ENCODE measurements at regions of chr12 and their contacts with region 1.

Region 1: DNA sequence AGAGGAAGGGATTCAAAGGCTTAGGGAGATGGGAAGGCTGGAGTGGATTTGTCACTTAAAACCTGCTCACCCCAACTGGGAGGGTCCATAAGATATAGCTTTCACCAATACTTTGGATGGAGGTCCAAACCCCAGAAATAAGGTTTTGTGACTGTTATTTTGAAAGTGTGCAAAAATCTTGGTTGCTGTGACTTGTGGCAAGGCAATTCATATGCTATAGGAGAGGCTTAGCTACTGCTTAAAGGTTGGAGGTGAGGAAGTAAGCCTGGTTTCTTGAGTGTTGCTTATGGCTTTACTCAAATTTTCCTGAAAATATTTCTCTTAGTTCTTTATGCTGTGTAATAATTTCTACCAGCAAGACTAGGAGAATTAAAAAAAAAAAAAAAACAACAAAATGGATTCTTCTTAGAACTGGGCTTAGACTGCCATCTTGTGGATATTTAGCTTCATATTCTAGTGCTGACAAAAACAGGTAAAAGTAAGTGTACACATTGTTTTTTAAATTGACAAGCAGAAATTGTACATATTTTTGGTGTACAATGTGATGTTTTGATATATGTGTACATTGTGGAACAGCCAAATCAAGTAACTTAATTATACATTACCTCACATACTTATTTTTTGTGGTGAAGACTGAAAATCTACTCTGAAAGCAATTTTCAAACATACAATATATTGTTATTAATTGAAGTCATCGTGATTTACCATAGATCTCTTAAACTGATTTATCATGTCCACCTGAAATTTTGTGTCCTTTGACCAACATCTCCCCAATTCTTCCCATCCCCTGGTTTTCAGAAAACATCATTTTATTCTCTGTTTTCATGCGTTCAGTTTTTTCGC is 23.0 kb downstream of the PDE6H start:
- DNase-seq: no peak
- H3K4me3 ChIP-seq: no peak overlapping the region
- H3K27ac ChIP-seq: no peak overlapping the region
- H3K4me1 ChIP-seq: peaks cover 0 to 8% of the 10 kb centered on the region in 2 donors
- H3K27me3 ChIP-seq: no peaks in the 10 kb centered on the region
- CTCF ChIP-seq: peak; percentile 40 to 92 (median 73)
- POLR2A ChIP-seq: no peak

Region 2: GRCh38 chr12:14723763-14724162 is 272.0 kb before region 1 on chr12:
- intact Hi-C with region 1: loop called in 1 of 2 experiments (anchors 10 kb)
- DNase-seq: peak; percentile 67 to 87 (median 70)
- H3K4me3 ChIP-seq: no peak overlapping the region
- H3K27ac ChIP-seq: no peak overlapping the region
- H3K4me1 ChIP-seq: no peaks in the 10 kb centered on the region
- H3K27me3 ChIP-seq: no peaks in the 10 kb centered on the region
- CTCF ChIP-seq: peak; percentile 58 to 87 (median 80)
- POLR2A ChIP-seq: no peak

Region 3: GRCh38 chr12:14845350-14845750 is 150.5 kb before region 1 on chr12:
- intact Hi-C with region 1: loop called (anchors 5 to 10 kb)
- DNase-seq: peak; percentile 41 to 84 (median 60)
- H3K4me3 ChIP-seq: no peak overlapping the region
- H3K27ac ChIP-seq: peak overlapping the region in 2 of 5 donors; percentile 39 to 60
- H3K4me1 ChIP-seq: peaks cover 34 to 36% of the 10 kb centered on the region in 2 donors
- H3K27me3 ChIP-seq: no peaks in the 10 kb centered on the region
- CTCF ChIP-seq: peak; percentile 60 to 93 (median 82)
- POLR2A ChIP-seq: no peak

Region 4: GRCh38 chr12:15050659-15051058 is 54.9 kb after region 1 on chr12:
- intact Hi-C with region 1: no loop called
- DNase-seq: no peak
- H3K4me3 ChIP-seq: no peak overlapping the region
- H3K27ac ChIP-seq: no peak overlapping the region
- H3K4me1 ChIP-seq: no peaks in the 10 kb centered on the region
- H3K27me3 ChIP-seq: no peaks in the 10 kb centered on the region
- CTCF ChIP-seq: no peak
- POLR2A ChIP-seq: no peak

Measured in adrenal gland (tissue), 19 donors.